ENCODE measurements at regions of chr2 and their contacts with region 1.

Region 1: DNA sequence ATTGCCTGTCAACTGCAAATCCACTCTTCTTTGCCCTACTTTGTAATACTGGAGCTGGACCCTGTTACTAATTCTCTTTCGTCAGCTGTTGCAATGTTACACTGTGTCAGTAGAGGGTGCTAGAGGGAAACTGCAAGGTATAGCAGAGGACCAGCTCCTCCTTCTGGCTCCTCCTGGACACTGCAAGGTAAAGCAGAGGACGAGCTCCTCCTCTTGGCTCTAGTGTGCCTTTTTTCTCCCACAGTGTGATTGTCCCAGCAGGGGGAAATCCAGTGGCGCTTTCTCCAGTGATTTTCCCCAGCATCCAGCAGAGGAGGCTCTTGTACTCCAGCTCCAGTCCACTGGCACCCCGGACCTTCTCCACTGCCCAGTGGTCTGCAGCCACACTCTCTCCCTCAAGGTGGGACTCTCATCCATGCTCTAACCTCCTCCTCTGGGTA is 95.6 kb downstream of the CAPN13 start:
- DNase-seq: peak; percentile 94
- ATAC-seq: peak; percentile 84
- H3K4me3 Mint-ChIP-seq: no peak overlapping the region
- H3K27ac Mint-ChIP-seq: no peak overlapping the region
- H3K4me1 Mint-ChIP-seq: no peaks in the 10 kb centered on the region
- H3K27me3 Mint-ChIP-seq: no peaks in the 10 kb centered on the region; the same call in 1 of the 2 replicates
- CTCF ChIP-seq: peak; percentile 98

Region 2: GRCh38 chr2:30201990-30202389 is 509.7 kb before region 1 on chr2:
- CTCF ChIA-PET with region 1: interaction called, 62 read pairs
- POLR2A ChIA-PET with region 1: no interaction called
- DNase-seq: no peak
- ATAC-seq: no peak
- H3K4me3 Mint-ChIP-seq: no peak overlapping the region
- H3K27ac Mint-ChIP-seq: no peak overlapping the region
- H3K4me1 Mint-ChIP-seq: no peaks in the 10 kb centered on the region
- H3K27me3 Mint-ChIP-seq: no peaks in the 10 kb centered on the region
- CTCF ChIP-seq: no peak

Region 3: DNA sequence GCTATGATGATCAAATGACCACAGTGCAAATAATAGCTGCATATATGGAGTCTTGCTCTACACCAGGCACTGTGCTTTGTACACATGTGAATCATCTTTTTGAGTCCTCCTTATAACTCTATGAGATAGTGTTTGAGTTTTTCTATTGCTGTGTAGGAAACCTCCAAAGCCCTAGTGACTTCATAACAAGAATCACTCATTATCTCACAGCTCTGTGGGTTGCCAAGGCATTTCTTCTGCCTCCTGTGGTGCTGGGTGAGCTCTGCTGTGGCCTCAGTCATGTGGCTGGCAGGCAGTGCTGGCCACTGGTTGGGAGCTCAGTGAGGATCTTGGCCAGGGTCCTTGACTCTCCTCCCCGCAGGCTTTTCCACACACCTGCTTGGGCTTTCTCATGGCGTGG is 57.8 kb before region 1 on chr2:
- CTCF ChIA-PET with region 1: interaction called, 14 read pairs
- POLR2A ChIA-PET with region 1: no interaction called
- DNase-seq: no peak
- ATAC-seq: no peak
- H3K4me3 Mint-ChIP-seq: no peak overlapping the region
- H3K27ac Mint-ChIP-seq: no peak overlapping the region
- H3K4me1 Mint-ChIP-seq: peaks cover 35% of the 10 kb centered on the region
- H3K27me3 Mint-ChIP-seq: peaks cover 45% of the 10 kb centered on the region
- CTCF ChIP-seq: no peak

Region 4: DNA sequence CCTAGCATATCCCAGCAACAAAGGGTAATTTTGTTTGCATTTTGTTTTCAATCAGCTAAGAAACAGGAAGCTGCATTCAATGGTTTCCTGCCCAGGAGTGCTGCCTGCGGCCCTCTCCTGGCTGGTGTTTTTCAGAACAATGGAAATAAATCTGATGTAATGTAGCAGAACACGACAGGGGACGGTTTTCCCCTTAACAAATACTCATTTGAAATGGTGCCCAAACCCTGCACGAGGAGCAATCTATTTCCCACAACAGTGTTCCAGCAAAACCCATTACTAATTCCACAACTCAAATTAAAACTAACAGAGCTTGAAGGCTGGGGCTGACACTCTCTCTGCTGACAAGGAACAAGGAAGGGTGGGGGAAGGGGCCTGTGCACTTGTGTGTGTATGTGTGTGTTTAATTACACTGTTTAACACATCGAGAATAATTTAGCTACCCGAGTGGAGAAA is 86.9 kb after region 1 on chr2:
- CTCF ChIA-PET with region 1: interaction called, 16 read pairs
- POLR2A ChIA-PET with region 1: no interaction called
- DNase-seq: no peak
- ATAC-seq: peak; percentile 73
- H3K4me3 Mint-ChIP-seq: no peak overlapping the region
- H3K27ac Mint-ChIP-seq: peak overlapping the region; percentile 59
- H3K4me1 Mint-ChIP-seq: peaks cover 27% of the 10 kb centered on the region
- H3K27me3 Mint-ChIP-seq: no peaks in the 10 kb centered on the region; the same call in 1 of the 2 replicates
- CTCF ChIP-seq: no peak

Region 5: GRCh38 chr2:30828586-30828985 is 116.9 kb after region 1 on chr2:
- CTCF ChIA-PET with region 1: no interaction called
- POLR2A ChIA-PET with region 1: no interaction called
- DNase-seq: no peak
- ATAC-seq: no peak
- H3K4me3 Mint-ChIP-seq: no peak overlapping the region
- H3K27ac Mint-ChIP-seq: no peak overlapping the region
- H3K4me1 Mint-ChIP-seq: no peaks in the 10 kb centered on the region
- H3K27me3 Mint-ChIP-seq: no peaks in the 10 kb centered on the region
- CTCF ChIP-seq: no peak

Region 6: GRCh38 chr2:31013301-31013700 is 301.6 kb after region 1 on chr2:
- CTCF ChIA-PET with region 1: no interaction called
- POLR2A ChIA-PET with region 1: no interaction called
- DNase-seq: no peak
- ATAC-seq: no peak
- H3K4me3 Mint-ChIP-seq: no peak overlapping the region
- H3K27ac Mint-ChIP-seq: no peak overlapping the region
- H3K4me1 Mint-ChIP-seq: peaks cover 11% of the 10 kb centered on the region
- H3K27me3 Mint-ChIP-seq: no peaks in the 10 kb centered on the region
- CTCF ChIP-seq: no peak

Region 7: DNA sequence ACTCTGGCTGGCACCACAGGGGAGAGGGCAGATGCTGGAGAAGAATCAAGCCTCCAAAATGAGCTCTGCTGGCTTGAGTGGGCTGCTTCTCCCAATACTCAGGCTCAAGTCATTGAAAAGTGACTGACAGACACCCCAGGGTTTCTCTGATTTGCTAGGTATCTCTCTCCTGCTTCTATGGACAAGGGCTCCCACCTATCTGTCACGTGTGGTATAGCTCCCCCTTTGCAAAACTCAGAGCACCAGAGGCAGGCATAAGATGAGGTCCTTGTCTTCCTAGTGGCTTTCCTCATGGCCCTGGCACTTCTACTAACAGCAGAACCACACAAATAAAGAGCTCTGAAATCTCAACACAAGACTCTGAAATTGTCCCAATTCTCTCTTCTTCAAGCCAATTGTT is 321.4 kb after region 1 on chr2:
- CTCF ChIA-PET with region 1: interaction called, 17 read pairs
- POLR2A ChIA-PET with region 1: no interaction called
- DNase-seq: no peak
- ATAC-seq: peak; percentile 82
- H3K4me3 Mint-ChIP-seq: no peak overlapping the region
- H3K27ac Mint-ChIP-seq: no peak overlapping the region
- H3K4me1 Mint-ChIP-seq: peaks cover 11% of the 10 kb centered on the region
- H3K27me3 Mint-ChIP-seq: no peaks in the 10 kb centered on the region
- CTCF ChIP-seq: no peak

Region 8: GRCh38 chr2:31192851-31193392 is 481.3 kb after region 1 on chr2:
- CTCF ChIA-PET with region 1: interaction called, 10 read pairs
- POLR2A ChIA-PET with region 1: no interaction called
- DNase-seq: peak; percentile 21
- ATAC-seq: peak; percentile 79
- H3K4me3 Mint-ChIP-seq: no peak overlapping the region
- H3K27ac Mint-ChIP-seq: no peak overlapping the region
- H3K4me1 Mint-ChIP-seq: peaks cover 11% of the 10 kb centered on the region
- H3K27me3 Mint-ChIP-seq: peaks cover 4% of the 10 kb centered on the region; the same call in 1 of the 2 replicates
- CTCF ChIP-seq: no peak